BJ (cell line): ENCODE measurements at regions of chr12 and their contacts with region 1.

Region 1: DNA sequence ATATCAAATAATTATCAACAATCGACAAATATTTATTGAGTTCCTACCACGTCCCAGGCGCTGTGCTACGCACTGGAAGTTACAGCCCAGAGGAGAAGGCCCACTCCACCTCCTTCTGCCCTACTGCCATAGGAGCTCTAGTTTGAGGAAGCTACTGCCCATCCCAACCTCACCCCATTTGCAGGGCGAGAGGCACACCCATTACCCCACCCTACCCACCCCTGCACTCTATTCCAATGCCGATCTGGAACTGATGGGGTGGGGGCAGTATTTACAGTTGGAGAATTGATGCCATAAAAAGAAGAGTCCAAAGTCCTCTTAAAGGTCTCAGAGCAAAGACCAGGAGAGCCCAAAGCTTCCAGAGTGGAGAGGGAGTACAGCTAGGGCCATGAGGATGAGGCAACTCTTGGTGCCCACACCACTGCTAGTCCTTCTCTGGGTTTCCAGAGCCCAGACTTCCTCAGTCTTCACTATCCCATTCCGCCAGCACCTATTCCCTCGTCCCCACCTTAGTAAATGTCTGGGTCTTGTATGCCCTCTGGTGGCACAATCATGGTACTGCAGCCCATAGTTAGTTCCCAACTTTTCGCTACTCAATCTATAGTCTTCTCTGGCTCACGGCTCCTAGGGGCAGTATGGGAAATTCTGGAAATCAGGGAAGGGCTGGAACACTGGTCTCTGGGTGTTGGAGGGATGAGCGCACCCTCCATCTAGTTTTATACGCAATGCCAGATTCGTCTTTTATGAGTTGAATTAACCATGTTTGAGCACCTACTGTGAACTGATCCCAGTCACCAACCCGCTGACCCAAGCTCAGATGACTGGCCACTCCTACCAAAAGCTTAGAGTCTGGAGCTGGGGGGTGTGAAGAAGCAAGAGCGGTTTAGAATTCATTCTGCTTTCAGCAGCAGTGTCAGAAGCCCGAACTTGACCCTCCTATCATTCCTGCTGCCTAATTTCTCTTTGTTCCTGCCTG is 6.9 kb upstream of the ADCY6 start:
- DNase-seq: no peak
- H3K4me3 ChIP-seq: no peak overlapping the region
- H3K27me3 ChIP-seq: no peaks in the 10 kb centered on the region
- CTCF ChIP-seq: peak; percentile 91

Region 2: GRCh38 chr12:48744251-48745008 is 51.3 kb before region 1 on chr12:
- CTCF ChIA-PET with region 1: interaction called, 226 read pairs
- POLR2A ChIA-PET with region 1: no interaction called
- DNase-seq: no peak
- H3K4me3 ChIP-seq: no peak overlapping the region
- H3K27me3 ChIP-seq: no peaks in the 10 kb centered on the region
- CTCF ChIP-seq: no peak

Region 3: GRCh38 chr12:48758221-48758620 is 37.5 kb before region 1 on chr12:
- CTCF ChIA-PET with region 1: interaction called, 226 read pairs
- POLR2A ChIA-PET with region 1: no interaction called
- DNase-seq: no peak
- H3K4me3 ChIP-seq: no peak overlapping the region
- H3K27me3 ChIP-seq: no peaks in the 10 kb centered on the region; the same call in 1 of the 2 replicates
- CTCF ChIP-seq: peak; percentile 10; the same call in 1 of the 2 replicates

Region 4: DNA sequence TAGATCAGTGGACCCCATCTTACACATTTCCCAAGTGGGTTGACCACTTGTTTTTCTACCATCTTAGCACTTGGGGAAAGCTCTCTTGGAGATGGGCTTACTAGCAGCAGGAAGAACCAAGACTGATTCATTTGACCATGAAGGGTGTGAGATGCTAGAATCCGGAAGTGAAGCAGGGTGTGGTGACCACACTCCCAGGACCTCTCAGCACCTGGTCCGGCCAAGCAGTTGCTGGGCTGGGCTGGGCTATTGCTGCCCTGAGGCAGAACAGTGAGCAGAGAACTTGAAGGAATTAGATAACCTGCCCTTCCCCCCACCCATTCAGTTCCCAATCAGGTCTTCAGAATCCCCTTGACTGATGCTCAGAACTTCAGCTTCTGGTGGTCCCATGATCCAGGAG is 31.2 kb before region 1 on chr12:
- CTCF ChIA-PET with region 1: interaction called, 226 read pairs
- POLR2A ChIA-PET with region 1: no interaction called
- DNase-seq: no peak
- H3K4me3 ChIP-seq: no peak overlapping the region
- H3K27me3 ChIP-seq: no peaks in the 10 kb centered on the region
- CTCF ChIP-seq: no peak

Region 5: DNA sequence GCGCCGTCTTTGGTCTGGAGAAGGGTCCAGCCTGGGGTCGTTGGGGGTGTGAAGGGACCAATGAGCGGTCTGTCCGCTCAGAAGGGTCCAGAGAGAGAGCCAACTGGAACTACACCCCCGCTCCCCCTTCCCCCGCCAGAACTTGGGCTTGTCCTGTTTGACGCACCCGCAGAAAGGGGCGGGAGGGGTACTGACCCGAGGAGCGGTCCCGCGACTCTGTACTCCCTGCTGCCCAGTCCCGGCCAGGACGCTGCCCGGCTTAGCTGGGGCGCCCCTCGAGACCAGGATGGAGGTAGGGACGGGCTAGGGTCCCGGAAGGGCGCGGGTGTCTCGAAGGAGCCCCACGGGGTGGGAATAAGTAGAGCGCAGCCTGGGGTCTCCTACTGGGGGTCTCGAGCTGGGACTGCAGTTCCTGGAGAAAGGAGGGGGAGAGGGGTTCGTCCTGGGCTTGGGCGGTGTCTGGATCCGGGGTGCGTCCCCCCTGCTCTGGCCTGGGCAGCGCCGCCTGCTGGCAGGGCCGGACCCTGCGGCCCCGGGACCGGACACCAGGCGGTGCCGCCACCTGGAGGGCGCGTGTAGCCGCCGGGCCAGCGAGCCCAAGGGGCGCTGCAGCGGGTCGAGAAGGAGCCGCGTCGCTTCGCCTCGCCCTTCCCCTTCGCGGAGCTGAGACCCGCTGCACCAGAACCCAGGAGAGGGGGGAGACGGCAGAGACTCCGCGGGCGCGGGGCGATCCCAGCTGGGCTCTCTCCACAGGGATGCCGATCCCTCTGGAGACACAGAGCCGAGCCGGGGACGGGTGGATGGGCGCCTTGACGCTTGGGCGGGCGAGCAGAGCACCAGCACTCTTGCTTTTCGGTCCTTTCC is 18.7 kb after region 1 on chr12:
- CTCF ChIA-PET with region 1: interaction called, 78 read pairs
- POLR2A ChIA-PET with region 1: interaction called, 3 read pairs
- DNase-seq: peak; percentile 31
- H3K4me3 ChIP-seq: peak overlapping the region; percentile 74
- H3K27me3 ChIP-seq: no peaks in the 10 kb centered on the region
- CTCF ChIP-seq: peak; percentile 82

Region 6: DNA sequence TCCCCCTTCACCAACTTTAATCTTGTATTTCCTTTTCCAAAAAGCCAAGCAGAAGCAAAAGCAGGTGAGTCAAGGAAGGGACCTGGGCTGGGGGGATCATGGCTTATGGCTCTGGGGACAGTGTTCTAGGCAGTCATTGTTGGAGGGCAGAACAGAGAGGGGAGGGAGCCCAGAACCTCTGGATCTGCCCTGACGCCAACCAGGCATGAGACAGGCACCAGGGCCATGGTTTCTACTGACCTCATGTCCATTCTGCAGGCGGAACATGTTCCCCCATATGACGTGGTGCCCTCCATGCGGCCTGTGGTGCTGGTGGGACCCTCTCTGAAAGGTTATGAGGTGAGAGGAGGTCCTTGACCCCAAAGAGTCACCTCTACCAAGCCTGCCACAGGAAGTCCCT is 29.1 kb after region 1 on chr12:
- CTCF ChIA-PET with region 1: no interaction called
- POLR2A ChIA-PET with region 1: no interaction called
- DNase-seq: no peak
- H3K4me3 ChIP-seq: no peak overlapping the region
- H3K27me3 ChIP-seq: no peaks in the 10 kb centered on the region
- CTCF ChIP-seq: no peak